HepG2 (cell line): ENCODE measurements at regions of chr1 and their contacts with region 1.

Region 1: GRCh38 chr1:230702934-230703678 is 10.8 kb downstream of the AGT start:
- DNase-seq: peak; percentile 97
- ATAC-seq: peak; percentile 89
- H3K4me3 ChIP-seq: peak overlapping the region in 1 of 3 experiments; percentile 32; a peak in 2 of 6 replicates
- H3K27ac ChIP-seq: peak overlapping the region; percentile 89
- H3K4me1 ChIP-seq: peaks cover 89% of the 10 kb centered on the region
- H3K27me3 ChIP-seq: no peaks in the 10 kb centered on the region
- CTCF ChIP-seq: 0 out of 2 replicates have a peak, but pooled peaks have one; percentile 21
- EP300 ChIP-seq: peak in 1 of 2 experiments; percentile 94; a peak in 3 of 4 replicates
- POLR2A ChIP-seq: no peak; a peak in 1 of 4 replicates
- RAD21 ChIP-seq: no peak; the same call in 1 of the 2 replicates

Region 2: DNA sequence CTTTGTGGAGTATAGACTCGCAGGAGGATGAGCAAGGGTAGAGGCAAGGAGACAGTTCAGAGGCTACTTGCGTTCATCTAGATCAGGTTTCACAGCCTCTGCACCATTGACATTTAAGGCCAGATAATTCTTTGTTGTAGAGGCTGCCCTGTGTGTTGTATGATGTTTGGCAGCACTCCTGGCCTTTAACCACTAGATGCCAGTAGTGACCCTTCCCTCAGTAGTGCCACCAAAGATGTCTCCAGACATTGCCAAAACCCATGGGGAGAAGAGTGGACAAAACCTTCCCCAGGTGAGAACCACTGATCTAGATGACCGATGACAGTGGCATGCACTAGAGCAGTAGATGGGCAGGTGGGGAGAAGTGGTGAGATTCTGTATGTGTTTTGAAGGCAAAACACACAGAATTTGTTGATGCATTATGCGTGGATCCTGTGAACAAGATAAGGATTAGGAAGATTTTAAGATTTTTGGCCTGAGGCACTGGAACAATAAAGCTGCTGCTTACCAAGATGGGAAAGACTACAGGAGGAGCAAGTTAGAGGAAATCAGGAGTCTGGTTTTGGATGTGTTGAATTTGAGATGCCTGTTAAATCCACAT is 70.7 kb before region 1 on chr1:
- CTCF ChIA-PET with region 1: no interaction called
- POLR2A ChIA-PET with region 1: no interaction called
- in situ Hi-C with region 1: no loop called
- intact Hi-C with region 1: loop called (anchors 2 kb)
- DNase-seq: peak; percentile 63
- ATAC-seq: peak; percentile 96
- H3K4me3 ChIP-seq: no peak overlapping the region
- H3K27ac ChIP-seq: no peak overlapping the region
- H3K4me1 ChIP-seq: peaks cover 40% of the 10 kb centered on the region
- H3K27me3 ChIP-seq: no peaks in the 10 kb centered on the region
- CTCF ChIP-seq: peak; percentile 94
- EP300 ChIP-seq: no peak
- POLR2A ChIP-seq: no peak
- RAD21 ChIP-seq: peak; percentile 82

Region 3: DNA sequence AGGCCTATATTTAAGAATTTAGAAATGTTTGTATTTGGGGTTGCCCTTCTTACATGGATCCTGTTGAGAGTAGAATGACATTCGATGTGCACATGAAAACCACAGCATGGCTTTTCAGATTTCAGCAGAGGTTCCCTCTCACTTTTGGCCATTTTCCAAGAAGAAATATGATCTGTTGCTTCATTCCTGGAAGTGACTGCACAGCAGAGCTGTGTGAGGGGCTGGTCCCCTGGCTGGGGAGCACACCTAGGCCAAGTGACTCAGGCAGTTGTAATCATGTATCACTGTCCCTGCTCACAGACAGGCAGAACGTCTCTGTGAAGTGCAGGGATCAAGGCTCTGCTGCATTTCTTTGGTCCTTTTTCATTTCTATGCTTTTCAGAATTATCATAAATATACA is 21.5 kb before region 1 on chr1:
- CTCF ChIA-PET with region 1: no interaction called
- POLR2A ChIA-PET with region 1: interaction called, 10 read pairs
- in situ Hi-C with region 1: no loop called
- intact Hi-C with region 1: loop called (anchors 2 kb)
- DNase-seq: peak; percentile 77
- ATAC-seq: peak; percentile 94
- H3K4me3 ChIP-seq: no peak overlapping the region
- H3K27ac ChIP-seq: peak overlapping the region; percentile 67
- H3K4me1 ChIP-seq: peaks cover 40% of the 10 kb centered on the region
- H3K27me3 ChIP-seq: no peaks in the 10 kb centered on the region
- CTCF ChIP-seq: no peak
- EP300 ChIP-seq: peak in 1 of 2 experiments; percentile 61; a peak in 1 of 4 replicates
- POLR2A ChIP-seq: no peak
- RAD21 ChIP-seq: no peak

Region 4: GRCh38 chr1:230728710-230729392 is 25.7 kb after region 1 on chr1:
- CTCF ChIA-PET with region 1: no interaction called
- POLR2A ChIA-PET with region 1: interaction called, 15 read pairs
- in situ Hi-C with region 1: no loop called
- intact Hi-C with region 1: loop called (anchors 1 kb)
- DNase-seq: peak; percentile 95
- ATAC-seq: peak; percentile 94
- H3K4me3 ChIP-seq: peak overlapping the region; percentile 3 to 63 (median 36); a peak in 4 of 6 replicates
- H3K27ac ChIP-seq: peak overlapping the region; percentile 94
- H3K4me1 ChIP-seq: peaks cover 94% of the 10 kb centered on the region
- H3K27me3 ChIP-seq: no peaks in the 10 kb centered on the region
- CTCF ChIP-seq: peak; percentile 38
- EP300 ChIP-seq: peak; percentile 89 to 96
- POLR2A ChIP-seq: peak in 1 of 2 experiments; percentile 60; a peak in 2 of 4 replicates
- RAD21 ChIP-seq: peak; percentile 54

Region 5: GRCh38 chr1:230772457-230773395 is 69.6 kb after region 1 on chr1:
- CTCF ChIA-PET with region 1: no interaction called
- POLR2A ChIA-PET with region 1: interaction called, 33 read pairs
- in situ Hi-C with region 1: no loop called
- intact Hi-C with region 1: loop called (anchors 2 kb)
- DNase-seq: peak; percentile 56
- ATAC-seq: peak; percentile 75
- H3K4me3 ChIP-seq: no peak overlapping the region; a peak in 1 of 6 replicates
- H3K27ac ChIP-seq: no peak overlapping the region
- H3K4me1 ChIP-seq: peaks cover 34% of the 10 kb centered on the region
- H3K27me3 ChIP-seq: peaks cover 1 to 7% of the 10 kb centered on the region in 2 experiments; a peak in 3 of 5 replicates
- CTCF ChIP-seq: peak; percentile 94
- EP300 ChIP-seq: no peak
- POLR2A ChIP-seq: no peak
- RAD21 ChIP-seq: peak; percentile 89